Thyroid gland (tissue), 4 donors: ENCODE measurements at regions of chr18 and their contacts with region 1.

Region 1: GRCh38 chr18:23503038-23503962 is at the start of gene RMC1:
- DNase-seq: peak; percentile 95 to 97
- H3K4me3 ChIP-seq: peak within 1 kb of the TSS; percentile 38 to 96 (median 92)
- H3K27ac ChIP-seq: peak within 1 kb of the TSS; percentile 85 to 89 (median 89)
- H3K4me1 ChIP-seq: peaks cover 18 to 23% of the 10 kb centered on the region in 2 donors
- H3K27me3 ChIP-seq: no peaks in the 10 kb centered on the region
- CTCF ChIP-seq: peak in 3 of 6 experiments; percentile 21 to 33 (median 21)
- POLR2A ChIP-seq: peak; percentile 3 to 80
- total RNA-seq, gene RMC1: 18.1 to 25.1 (median 21.7) TPM

Region 2: GRCh38 chr18:23452728-23453679 is 50.3 kb before region 1 on chr18 and contains the start of gene RIOK3:
- intact Hi-C with region 1: loop called (anchors 10 kb)
- DNase-seq: peak; percentile 98 to 99
- H3K4me3 ChIP-seq: peak within 1 kb of the TSS; percentile 70 to 98 (median 90)
- H3K27ac ChIP-seq: peak within 1 kb of the TSS; percentile 83 to 90 (median 89)
- H3K4me1 ChIP-seq: peaks cover 27 to 30% of the 10 kb centered on the region in 2 donors
- H3K27me3 ChIP-seq: no peaks in the 10 kb centered on the region
- CTCF ChIP-seq: peak in 2 of 6 experiments; percentile 10 to 18
- POLR2A ChIP-seq: peak; percentile 68 to 91
- total RNA-seq, gene RIOK3: 51.2 to 85.7 (median 63.6) TPM